Heart left ventricle (tissue), 16 donors: ENCODE measurements at regions of chr20 and their contacts with region 1.

Region 1: DNA sequence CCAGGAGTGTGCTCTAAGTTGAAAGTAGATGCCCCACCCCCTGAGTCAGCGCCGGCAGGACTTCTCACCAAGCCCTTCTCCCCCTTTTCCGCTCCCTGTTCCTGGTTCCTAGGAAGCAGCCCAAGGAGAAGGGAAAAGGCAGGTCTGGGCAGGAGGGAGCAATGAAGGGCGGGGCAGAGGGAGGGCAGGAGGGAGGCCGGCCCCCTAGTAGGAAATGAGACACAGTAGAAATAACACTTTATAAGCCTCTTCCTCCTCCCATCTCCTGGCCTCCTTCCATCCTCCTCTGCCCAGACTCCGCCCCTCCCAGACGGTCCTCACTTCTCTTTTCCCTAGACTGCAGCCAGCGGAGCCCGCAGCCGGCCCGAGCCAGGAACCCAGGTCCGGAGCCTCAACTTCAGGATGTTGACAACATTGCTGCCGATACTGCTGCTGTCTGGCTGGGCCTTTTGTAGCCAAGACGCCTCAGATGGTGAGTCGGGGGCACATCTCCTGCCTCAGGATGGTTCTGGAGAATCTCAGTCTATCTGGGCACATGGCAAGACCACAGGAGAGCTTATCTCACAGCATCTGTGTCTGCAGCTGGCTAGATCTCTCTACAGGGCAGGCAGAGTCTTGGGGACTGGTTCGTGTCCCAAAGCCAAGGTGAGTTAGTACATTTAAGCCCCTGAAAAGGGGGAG is at the start of gene PROCR:
- DNase-seq: peak; percentile 88 to 91 (median 89)
- ATAC-seq: peak; percentile 91 to 97 (median 96)
- H3K4me3 ChIP-seq: peak within 1 kb of the TSS in 11 of 12 donors; percentile 17 to 58 (median 50)
- H3K27ac ChIP-seq: peak within 1 kb of the TSS; percentile 23 to 83 (median 68)
- H3K4me1 ChIP-seq: peaks cover 0 to 31% (median 18%) of the 10 kb centered on the region in 12 donors
- H3K27me3 ChIP-seq: no peaks in the 10 kb centered on the region
- CTCF ChIP-seq: no peak
- POLR2A ChIP-seq: no peak
- total RNA-seq, gene PROCR: 2.5 to 64.6 (median 9.9) TPM

Region 2: GRCh38 chr20:34938502-34939163 is 233.3 kb before region 1 on chr20:
- intact Hi-C with region 1: no loop called
- DNase-seq: peak; percentile 72 to 87 (median 78)
- ATAC-seq: peak; percentile 77 to 88 (median 84)
- H3K4me3 ChIP-seq: no peak overlapping the region
- H3K27ac ChIP-seq: peak overlapping the region in 11 of 12 donors; percentile 49 to 88 (median 79)
- H3K4me1 ChIP-seq: peaks cover 0 to 40% (median 16%) of the 10 kb centered on the region in 12 donors
- H3K27me3 ChIP-seq: no peaks in the 10 kb centered on the region
- CTCF ChIP-seq: no peak
- POLR2A ChIP-seq: no peak

Region 3: GRCh38 chr20:35207950-35208611 is 36.2 kb after region 1 on chr20:
- intact Hi-C with region 1: loop called in 5 of 10 experiments (anchors 1 to 5 kb)
- DNase-seq: peak; percentile 78 to 89 (median 83)
- ATAC-seq: peak; percentile 91 to 96 (median 94)
- H3K4me3 ChIP-seq: peak overlapping the region in 8 of 12 donors; percentile 2 to 35 (median 22)
- H3K27ac ChIP-seq: peak overlapping the region; percentile 19 to 80 (median 71)
- H3K4me1 ChIP-seq: peaks cover 0 to 13% (median 6%) of the 10 kb centered on the region in 12 donors
- H3K27me3 ChIP-seq: no peaks in the 10 kb centered on the region
- CTCF ChIP-seq: peak; percentile 75 to 88 (median 82)
- POLR2A ChIP-seq: no peak

Region 4: GRCh38 chr20:35226775-35227681 is 55.1 kb after region 1 on chr20:
- intact Hi-C with region 1: no loop called
- DNase-seq: peak in 4 of 5 donors; percentile 23 to 36 (median 32)
- ATAC-seq: peak; percentile 30 to 90 (median 80)
- H3K4me3 ChIP-seq: peak overlapping the region in 7 of 12 donors; percentile 2 to 42 (median 19)
- H3K27ac ChIP-seq: no peak overlapping the region
- H3K4me1 ChIP-seq: peaks cover 0 to 12% (median 3%) of the 10 kb centered on the region in 12 donors
- H3K27me3 ChIP-seq: peaks cover 0 to 7% (median 0%) of the 10 kb centered on the region in 9 donors
- CTCF ChIP-seq: no peak
- POLR2A ChIP-seq: no peak

Region 5: DNA sequence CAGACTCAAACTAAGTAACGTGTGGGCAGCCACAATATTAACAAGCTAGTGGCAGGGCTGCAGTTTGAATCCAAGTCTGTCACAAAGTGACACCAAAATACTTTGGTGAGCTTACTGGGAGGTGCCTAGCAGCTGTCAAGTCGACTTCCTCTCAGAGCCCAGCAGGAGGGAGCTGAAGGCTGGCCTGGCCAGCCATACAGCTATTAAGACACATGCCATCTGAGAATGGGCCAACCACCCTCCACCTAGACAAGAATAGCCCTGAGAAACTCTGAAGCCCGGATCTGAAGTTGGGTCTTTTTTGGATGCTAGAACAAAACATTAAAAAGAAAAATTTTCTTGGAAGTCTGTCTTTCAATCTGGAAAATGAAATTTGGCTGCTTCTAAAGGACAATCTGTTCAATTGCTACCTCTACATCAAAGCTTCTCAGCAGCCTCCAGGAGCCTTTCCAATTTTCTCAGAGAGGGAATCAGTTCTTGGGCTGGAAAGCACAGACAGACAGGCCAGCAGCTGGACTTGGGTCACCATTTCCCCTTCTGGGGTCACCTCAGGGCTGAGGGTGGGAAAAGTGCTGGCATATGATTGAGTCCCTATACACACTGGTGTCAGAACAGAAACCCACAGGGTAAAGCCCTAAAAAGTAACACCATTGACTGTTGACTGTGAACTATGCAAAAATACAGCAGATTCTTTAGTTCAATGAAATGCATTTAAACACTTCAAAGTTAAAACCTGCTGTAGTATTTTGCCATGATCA is 197.0 kb after region 1 on chr20:
- intact Hi-C with region 1: no loop called
- DNase-seq: peak in 4 of 5 donors; percentile 33 to 71 (median 50)
- ATAC-seq: peak; percentile 92 to 98 (median 96)
- H3K4me3 ChIP-seq: no peak overlapping the region
- H3K27ac ChIP-seq: peak overlapping the region in 8 of 12 donors; percentile 8 to 52 (median 32)
- H3K4me1 ChIP-seq: peaks cover 0 to 19% (median 15%) of the 10 kb centered on the region in 12 donors
- H3K27me3 ChIP-seq: no peaks in the 10 kb centered on the region
- CTCF ChIP-seq: peak in 1 of 12 donors; percentile 4
- POLR2A ChIP-seq: no peak

Region 6: DNA sequence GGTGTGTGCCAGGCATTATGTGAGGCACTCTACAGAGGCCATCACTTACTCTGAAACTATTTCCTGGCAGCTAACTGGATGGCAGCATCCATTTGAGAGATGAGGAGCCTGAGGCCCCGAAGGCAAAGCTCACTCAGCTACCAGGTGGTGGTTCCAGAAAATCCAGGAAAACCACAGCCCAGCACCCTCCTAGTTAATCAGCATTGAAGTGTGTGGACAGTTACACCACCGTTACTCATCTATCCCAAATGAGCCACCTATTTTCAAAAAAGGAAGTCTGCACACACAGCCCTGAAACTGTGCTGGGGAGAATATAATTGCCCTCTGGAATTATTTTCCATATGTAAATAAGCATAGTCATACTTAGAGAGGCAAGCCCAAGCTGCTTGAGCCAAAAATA is 863.9 kb after region 1 on chr20:
- intact Hi-C with region 1: no loop called
- DNase-seq: no peak
- ATAC-seq: no peak
- H3K4me3 ChIP-seq: no peak overlapping the region
- H3K27ac ChIP-seq: no peak overlapping the region
- H3K4me1 ChIP-seq: peaks cover 0 to 1% (median 0%) of the 10 kb centered on the region in 12 donors
- H3K27me3 ChIP-seq: no peaks in the 10 kb centered on the region
- CTCF ChIP-seq: no peak
- POLR2A ChIP-seq: no peak